ENCODE measurements at regions of chr12 and their contacts with region 1.

Region 1: DNA sequence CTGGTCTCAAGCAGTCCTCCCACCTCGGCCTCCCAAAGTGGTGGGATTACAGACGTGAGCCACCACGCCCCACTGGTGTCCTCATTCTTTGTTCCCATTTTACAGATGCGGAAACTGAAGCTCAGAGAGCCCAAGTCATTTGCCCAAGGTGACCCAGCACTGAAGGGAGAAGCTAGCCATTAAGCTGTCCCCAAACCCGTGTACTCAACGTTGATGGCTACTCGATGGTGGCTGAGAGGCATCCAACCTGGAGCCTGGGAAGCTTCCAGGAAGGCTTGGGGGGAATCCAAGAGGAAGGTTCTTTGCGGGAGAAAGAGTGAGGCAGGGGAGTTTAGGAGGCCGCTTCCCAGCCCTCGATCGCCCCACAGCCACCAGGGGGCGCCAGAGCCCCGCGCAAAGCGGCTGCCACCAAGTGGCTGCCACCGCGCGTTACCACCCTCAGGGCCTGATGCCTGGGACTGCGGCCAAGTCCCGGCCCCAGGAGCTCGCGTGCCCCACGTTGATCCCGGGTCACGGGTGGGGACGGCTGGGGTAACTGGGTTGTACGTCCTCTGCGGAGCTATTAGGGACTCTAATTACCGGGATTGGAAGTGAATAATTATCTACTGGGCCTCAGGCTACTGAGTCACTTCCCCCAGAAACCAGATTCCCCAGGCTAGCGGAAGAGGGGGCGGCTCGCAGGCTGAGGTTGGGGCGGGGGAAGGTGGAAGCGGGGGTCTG is 8.8 kb upstream of the SH2B3 start:
- DNase-seq: peak; percentile 76 to 84
- H3K4me3 ChIP-seq: peak overlapping the region; percentile 26; the same call in 1 of the 2 replicates
- H3K27ac ChIP-seq: peak overlapping the region; percentile 71
- H3K4me1 ChIP-seq: peaks cover 31% of the 10 kb centered on the region
- H3K27me3 ChIP-seq: no peaks in the 10 kb centered on the region
- CTCF ChIP-seq: peak; percentile 98

Region 2: GRCh38 chr12:111363642-111363977 is 33.3 kb before region 1 on chr12:
- CTCF ChIA-PET with region 1: no interaction called
- POLR2A ChIA-PET with region 1: no interaction called
- intact Hi-C with region 1: loop called (anchors 5 kb)
- DNase-seq: peak; percentile 44 to 83
- H3K4me3 ChIP-seq: no peak overlapping the region
- H3K27ac ChIP-seq: peak overlapping the region; percentile 62
- H3K4me1 ChIP-seq: peaks cover 59% of the 10 kb centered on the region
- H3K27me3 ChIP-seq: no peaks in the 10 kb centered on the region
- CTCF ChIP-seq: no peak

Region 3: GRCh38 chr12:111442301-111443045 is 45.6 kb after region 1 on chr12:
- CTCF ChIA-PET with region 1: interaction called, 12 read pairs
- POLR2A ChIA-PET with region 1: no interaction called
- intact Hi-C with region 1: no loop called
- DNase-seq: no peak
- H3K4me3 ChIP-seq: no peak overlapping the region
- H3K27ac ChIP-seq: no peak overlapping the region
- H3K4me1 ChIP-seq: peaks cover 13% of the 10 kb centered on the region
- H3K27me3 ChIP-seq: no peaks in the 10 kb centered on the region
- CTCF ChIP-seq: no peak

Region 4: GRCh38 chr12:111673503-111673902 is 276.6 kb after region 1 on chr12:
- CTCF ChIA-PET with region 1: interaction called, 3 read pairs
- POLR2A ChIA-PET with region 1: no interaction called
- intact Hi-C with region 1: loop called (anchors 1 kb)
- DNase-seq: no peak
- H3K4me3 ChIP-seq: no peak overlapping the region
- H3K27ac ChIP-seq: no peak overlapping the region
- H3K4me1 ChIP-seq: no peaks in the 10 kb centered on the region
- H3K27me3 ChIP-seq: no peaks in the 10 kb centered on the region
- CTCF ChIP-seq: peak; percentile 69

Measured in PC-9 (cell line).